ENCODE measurements at regions of chr7 and their contacts with region 1.

Region 1: DNA sequence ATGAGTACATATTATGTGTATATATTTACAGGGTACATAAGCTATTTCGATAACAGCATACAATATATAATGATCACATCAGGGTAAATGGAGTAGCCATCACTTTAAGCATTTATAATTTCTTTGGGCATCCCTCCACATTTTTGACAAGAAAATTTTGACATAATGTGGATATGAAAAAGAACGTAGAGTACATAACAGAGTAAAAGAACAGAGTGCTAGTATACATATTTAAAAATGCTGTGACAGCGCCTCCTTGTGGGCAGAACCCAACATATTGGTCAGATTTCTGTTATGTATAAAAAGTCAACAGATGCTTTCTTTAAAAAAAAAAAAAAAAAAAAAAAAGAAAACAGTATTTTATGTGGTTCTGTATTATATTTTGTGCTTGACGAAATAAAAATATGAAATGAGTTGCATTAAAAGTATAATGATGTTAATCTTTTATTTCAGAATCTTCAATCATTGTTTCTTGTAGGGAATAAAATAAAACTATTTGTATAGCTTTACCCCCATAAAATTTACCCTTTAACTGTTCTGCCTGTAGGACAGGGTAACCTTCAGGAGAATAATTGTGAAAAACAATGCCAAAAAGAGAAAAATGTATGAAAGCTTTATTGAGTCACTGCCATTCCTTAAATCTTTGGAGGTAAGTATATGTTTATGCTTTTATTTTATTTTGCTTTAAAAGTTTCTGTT is 18.3 kb upstream of the HBP1 start:
- DNase-seq: peak; percentile 58
- H3K4me3 ChIP-seq: no peak overlapping the region
- H3K27ac ChIP-seq: no peak overlapping the region
- H3K4me1 ChIP-seq: peaks cover 10% of the 10 kb centered on the region
- H3K27me3 ChIP-seq: no peaks in the 10 kb centered on the region
- CTCF ChIP-seq: peak; percentile 75

Region 2: GRCh38 chr7:106794276-106795082 is 356.0 kb before region 1 on chr7:
- intact Hi-C with region 1: loop called (anchors 5 kb)
- DNase-seq: no peak
- H3K4me3 ChIP-seq: no peak overlapping the region
- H3K27ac ChIP-seq: no peak overlapping the region
- H3K4me1 ChIP-seq: no peaks in the 10 kb centered on the region
- H3K27me3 ChIP-seq: peaks cover 18% of the 10 kb centered on the region
- CTCF ChIP-seq: no peak

Region 3: DNA sequence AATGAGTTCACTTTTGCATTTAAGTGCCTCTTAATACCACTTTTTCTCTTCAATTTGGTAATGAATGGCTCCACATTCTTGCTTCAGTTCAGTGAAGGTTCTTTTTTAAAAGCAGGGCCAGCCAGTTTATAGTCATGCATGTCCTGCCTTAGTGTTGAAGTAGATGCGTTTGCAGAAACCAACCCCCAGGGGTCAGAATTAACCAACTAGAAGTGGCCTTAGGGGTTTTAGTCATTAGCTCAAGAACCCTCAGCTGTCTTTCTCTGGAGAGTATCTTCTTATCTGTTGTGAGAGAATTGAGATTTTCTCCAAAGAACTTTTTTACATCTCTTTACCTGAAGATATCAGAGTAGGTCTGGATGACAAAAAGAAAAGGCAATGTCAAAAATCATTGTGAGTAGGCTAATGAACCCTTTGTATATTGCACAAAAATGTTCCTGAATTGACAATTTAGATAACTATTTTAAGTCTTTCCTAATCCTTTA is 203.2 kb before region 1 on chr7:
- intact Hi-C with region 1: loop called (anchors 2 kb)
- DNase-seq: no peak
- H3K4me3 ChIP-seq: no peak overlapping the region
- H3K27ac ChIP-seq: no peak overlapping the region
- H3K4me1 ChIP-seq: no peaks in the 10 kb centered on the region
- H3K27me3 ChIP-seq: peaks cover 8% of the 10 kb centered on the region
- CTCF ChIP-seq: peak; percentile 82

Measured in left ventricle myocardium inferior (tissue), 1 donor.